CD4-positive, alpha-beta T cell (primary cell): ENCODE measurements at regions of chr14 and their contacts with region 1.

Region 1: DNA sequence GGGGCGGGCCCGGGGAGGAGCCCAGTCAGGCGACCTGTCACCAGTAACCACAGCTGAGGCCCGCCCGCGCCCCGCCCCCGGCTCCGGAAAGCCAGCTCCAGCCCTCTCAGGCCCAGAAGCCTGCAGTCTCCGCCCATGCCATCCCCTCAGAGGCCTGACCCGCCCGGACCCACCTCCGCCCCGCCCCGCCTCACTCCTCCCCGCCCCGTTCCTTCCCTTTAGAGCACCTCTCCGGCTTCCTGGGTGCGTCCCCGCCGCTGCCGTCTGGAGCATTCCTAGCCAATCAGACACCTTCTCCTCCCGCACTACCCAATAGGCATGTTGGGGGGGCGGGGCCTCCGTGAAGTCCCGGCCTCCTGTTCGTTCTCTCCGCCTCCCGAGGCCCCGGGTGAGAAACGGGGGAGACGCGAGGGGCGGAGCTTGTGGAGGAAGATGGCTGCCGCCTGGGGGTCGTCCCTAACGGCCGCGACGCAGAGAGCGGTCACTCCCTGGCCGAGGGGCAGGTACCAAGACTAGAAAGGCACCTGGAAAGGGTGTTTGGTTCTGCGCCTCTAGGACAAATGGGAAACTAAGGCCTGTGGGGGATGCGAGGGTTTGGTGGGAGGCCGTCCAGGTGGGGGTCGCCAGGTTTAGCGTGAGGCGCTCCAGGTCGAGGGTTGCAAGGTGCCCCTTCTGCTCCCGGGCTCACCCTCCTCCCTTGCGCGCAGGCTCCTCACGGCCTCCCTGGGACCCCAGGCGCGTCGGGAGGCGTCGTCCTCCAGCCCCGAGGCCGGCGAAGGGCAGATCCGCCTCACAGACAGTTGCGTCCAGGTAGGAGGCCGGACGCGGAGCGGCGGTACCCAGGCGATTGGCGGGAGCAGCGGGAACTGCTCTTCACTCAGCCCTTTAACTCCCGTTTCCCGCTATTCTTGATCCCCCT is at the start of gene ISCA2:
- DNase-seq: peak; percentile 97 to 100 (median 99)
- ATAC-seq: peak; percentile 92
- H3K4me3 ChIP-seq: peak within 1 kb of the TSS; percentile 86
- H3K4me3 Mint-ChIP-seq: no peak within 1 kb of the TSS
- H3K27ac ChIP-seq: peak within 1 kb of the TSS; percentile 77 to 80
- H3K27ac Mint-ChIP-seq: no peak within 1 kb of the TSS
- H3K4me1 ChIP-seq: peaks cover 19% of the 10 kb centered on the region
- H3K4me1 Mint-ChIP-seq: peaks cover 35% of the 10 kb centered on the region
- H3K27me3 ChIP-seq: no peaks in the 10 kb centered on the region
- H3K27me3 Mint-ChIP-seq: no peaks in the 10 kb centered on the region
- CTCF ChIP-seq: no peak
- total RNA-seq, gene ISCA2: 22.5 to 23.7 TPM

Region 2: GRCh38 chr14:73458151-73458976 is 1035.2 kb before region 1 on chr14 and contains the start of gene NUMB:
- CTCF ChIA-PET with region 1: no interaction called
- POLR2A ChIA-PET with region 1: no interaction called
- intact Hi-C with region 1: loop called in 1 of 2 experiments (anchors 10 kb)
- DNase-seq: peak; percentile 88 to 100 (median 94)
- ATAC-seq: peak; percentile 96
- H3K4me3 ChIP-seq: peak within 1 kb of the TSS; percentile 98
- H3K4me3 Mint-ChIP-seq: peak within 1 kb of the TSS; percentile 97
- H3K27ac ChIP-seq: peak within 1 kb of the TSS; percentile 23 to 37
- H3K27ac Mint-ChIP-seq: peak within 1 kb of the TSS; percentile 84
- H3K4me1 ChIP-seq: peaks cover 21% of the 10 kb centered on the region
- H3K4me1 Mint-ChIP-seq: peaks cover 45% of the 10 kb centered on the region
- H3K27me3 ChIP-seq: no peaks in the 10 kb centered on the region
- H3K27me3 Mint-ChIP-seq: no peaks in the 10 kb centered on the region
- CTCF ChIP-seq: no peak
- total RNA-seq, gene NUMB: 27.9 to 31.5 TPM

Region 3: GRCh38 chr14:74084277-74085046 is 409.1 kb before region 1 on chr14 and contains the starts of genes ALDH6A1 and LIN52:
- CTCF ChIA-PET with region 1: no interaction called
- POLR2A ChIA-PET with region 1: no interaction called
- intact Hi-C with region 1: loop called in 1 of 2 experiments (anchors 10 kb)
- DNase-seq: peak; percentile 98 to 100 (median 100)
- ATAC-seq: peak; percentile 86
- H3K4me3 ChIP-seq: peak within 1 kb of the TSS; percentile 95
- H3K4me3 Mint-ChIP-seq: peak within 1 kb of the TSS; percentile 94
- H3K27ac ChIP-seq: peak within 1 kb of the TSS; percentile 52 to 72
- H3K27ac Mint-ChIP-seq: peak within 1 kb of the TSS; percentile 86
- H3K4me1 ChIP-seq: peaks cover 21% of the 10 kb centered on the region
- H3K4me1 Mint-ChIP-seq: peaks cover 36% of the 10 kb centered on the region
- H3K27me3 ChIP-seq: no peaks in the 10 kb centered on the region
- H3K27me3 Mint-ChIP-seq: no peaks in the 10 kb centered on the region
- CTCF ChIP-seq: no peak
- total RNA-seq, gene ALDH6A1: 5.3 to 6.2 TPM
- total RNA-seq, gene LIN52: 5.4 to 6.8 TPM

Region 4: DNA sequence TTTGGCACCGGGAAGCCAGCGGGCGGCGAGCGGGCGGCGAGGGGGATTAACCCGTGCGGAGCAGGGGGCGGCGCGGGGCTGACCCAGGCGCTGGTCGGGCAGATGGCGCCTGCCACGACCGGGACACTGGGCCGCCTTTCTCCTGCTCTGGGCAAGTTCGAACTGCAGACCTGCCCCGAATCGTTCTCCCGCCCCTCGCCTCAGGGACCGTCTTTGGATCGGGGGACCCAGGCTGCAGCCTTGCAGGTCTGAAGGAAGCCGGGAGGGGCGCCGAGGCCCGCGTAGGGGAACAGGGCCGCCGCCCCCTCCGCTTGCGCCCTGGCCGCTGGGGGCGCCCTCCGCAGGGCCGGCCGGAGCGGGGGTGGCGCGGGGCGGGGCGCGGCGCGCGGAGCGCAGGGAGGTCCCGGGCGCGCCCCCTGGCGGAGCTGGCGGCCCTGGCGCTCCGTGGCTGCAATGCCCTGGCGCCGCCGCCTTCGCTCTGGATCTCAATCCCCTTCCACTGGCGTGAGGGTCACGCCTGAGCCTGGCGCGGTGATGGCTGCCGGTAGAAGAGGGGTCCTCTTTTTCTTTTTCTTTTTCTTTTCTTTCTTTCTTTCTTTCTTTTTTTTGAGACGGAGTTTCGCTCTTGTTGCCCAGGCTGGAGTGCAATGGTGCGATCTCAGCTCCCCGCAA is 118.9 kb after region 1 on chr14:
- CTCF ChIA-PET with region 1: no interaction called
- POLR2A ChIA-PET with region 1: interaction called, 3 read pairs
- intact Hi-C with region 1: loop called in 1 of 2 experiments (anchors 5 kb)
- DNase-seq: peak; percentile 65 to 95 (median 81)
- ATAC-seq: peak; percentile 79
- H3K4me3 ChIP-seq: peak overlapping the region; percentile 65
- H3K4me3 Mint-ChIP-seq: peak overlapping the region; percentile 79
- H3K27ac ChIP-seq: no peak overlapping the region
- H3K27ac Mint-ChIP-seq: no peak overlapping the region
- H3K4me1 ChIP-seq: peaks cover 54% of the 10 kb centered on the region
- H3K4me1 Mint-ChIP-seq: peaks cover 29% of the 10 kb centered on the region
- H3K27me3 ChIP-seq: no peaks in the 10 kb centered on the region
- H3K27me3 Mint-ChIP-seq: peaks cover 9% of the 10 kb centered on the region
- CTCF ChIP-seq: peak; percentile 52

Region 5: DNA sequence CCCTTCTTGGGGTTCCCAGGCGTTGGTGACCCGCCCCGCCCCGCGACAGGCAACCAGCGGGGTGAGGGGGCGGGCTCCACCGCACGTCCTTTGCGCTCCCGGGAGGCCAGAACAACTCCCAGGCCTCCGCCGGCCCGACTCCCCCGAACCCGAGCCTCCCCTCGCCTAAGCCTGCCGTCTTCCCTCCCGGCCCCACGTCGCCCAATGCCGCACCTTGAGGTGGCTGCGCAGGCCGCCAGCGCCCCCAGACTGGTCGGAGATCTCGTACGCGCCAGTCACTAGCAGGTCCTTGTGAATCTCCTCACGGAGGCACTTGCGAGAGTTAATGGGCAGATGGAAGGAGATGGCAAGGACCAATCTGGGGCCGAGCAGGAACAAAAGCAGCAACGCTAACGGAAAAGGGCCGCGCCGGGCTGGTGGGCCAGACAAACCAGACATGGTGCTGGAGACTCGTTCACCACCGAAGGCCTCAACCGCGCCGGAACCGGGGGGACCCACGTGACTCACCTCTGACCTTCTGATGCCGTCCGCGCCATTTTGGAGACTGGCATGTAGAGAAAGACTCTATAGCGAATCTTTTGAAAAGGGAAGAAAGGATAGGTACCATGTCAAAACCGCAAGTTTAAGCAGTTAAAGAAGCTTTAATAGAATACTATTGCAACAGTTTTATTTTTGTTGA is 682.7 kb after region 1 on chr14 and contains the start of gene TMED10:
- CTCF ChIA-PET with region 1: no interaction called
- POLR2A ChIA-PET with region 1: no interaction called
- intact Hi-C with region 1: loop called in 1 of 2 experiments (anchors 5 kb)
- DNase-seq: peak; percentile 84 to 95 (median 89)
- ATAC-seq: peak; percentile 75
- H3K4me3 ChIP-seq: peak within 1 kb of the TSS; percentile 79
- H3K4me3 Mint-ChIP-seq: peak within 1 kb of the TSS; percentile 94
- H3K27ac ChIP-seq: peak within 1 kb of the TSS; percentile 99 to 100
- H3K27ac Mint-ChIP-seq: peak within 1 kb of the TSS; percentile 97
- H3K4me1 ChIP-seq: peaks cover 30% of the 10 kb centered on the region
- H3K4me1 Mint-ChIP-seq: peaks cover 53% of the 10 kb centered on the region
- H3K27me3 ChIP-seq: no peaks in the 10 kb centered on the region
- H3K27me3 Mint-ChIP-seq: no peaks in the 10 kb centered on the region
- CTCF ChIP-seq: no peak
- total RNA-seq, gene TMED10: 153 to 156 TPM